BJ (cell line): ENCODE measurements at regions of chr20 and their contacts with region 1.

Region 1: DNA sequence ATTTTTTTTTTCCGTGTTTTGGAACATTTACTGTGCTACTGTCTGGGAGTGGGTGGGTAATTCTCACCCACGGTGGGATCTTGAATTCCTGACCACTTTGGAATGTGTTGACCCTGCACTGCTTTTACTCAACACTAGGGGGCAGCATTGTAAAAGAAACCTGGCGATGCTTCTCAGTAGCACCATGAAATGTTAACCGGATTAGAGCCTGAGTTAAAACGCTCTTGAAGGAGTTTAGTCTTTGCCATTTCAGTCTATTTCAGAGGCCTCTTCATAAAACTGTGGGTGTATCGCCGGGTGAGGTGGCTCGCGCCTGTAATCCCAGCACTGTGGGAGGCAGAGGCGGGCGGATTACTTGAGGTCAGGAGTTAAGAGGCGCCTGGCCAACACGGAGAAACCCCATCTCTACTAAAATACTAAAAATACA is 114.4 kb upstream of the PRND start:
- DNase-seq: no peak
- H3K4me3 ChIP-seq: no peak overlapping the region
- H3K27me3 ChIP-seq: no peaks in the 10 kb centered on the region
- CTCF ChIP-seq: peak; percentile 89

Region 2: GRCh38 chr20:4714818-4715217 is 107.5 kb after region 1 on chr20:
- CTCF ChIA-PET with region 1: interaction called, 97 read pairs
- POLR2A ChIA-PET with region 1: no interaction called
- DNase-seq: no peak
- H3K4me3 ChIP-seq: no peak overlapping the region
- H3K27me3 ChIP-seq: peaks cover 2% of the 10 kb centered on the region; the same call in 1 of the 2 replicates
- CTCF ChIP-seq: no peak

Region 3: GRCh38 chr20:4726710-4727397 is 119.6 kb after region 1 on chr20:
- CTCF ChIA-PET with region 1: interaction called, 97 read pairs
- POLR2A ChIA-PET with region 1: no interaction called
- DNase-seq: peak; percentile 64
- H3K4me3 ChIP-seq: peak overlapping the region; percentile 4
- H3K27me3 ChIP-seq: peaks cover 3% of the 10 kb centered on the region
- CTCF ChIP-seq: no peak